ENCODE measurements at regions of chr9 and their contacts with region 1.

Region 1: GRCh38 chr9:6757456-6758247 is at the start of gene KDM4C:
- DNase-seq: peak; percentile 93
- H3K4me3 Mint-ChIP-seq: peak within 1 kb of the TSS; percentile 86
- H3K27ac Mint-ChIP-seq: peak within 1 kb of the TSS; percentile 99
- H3K4me1 Mint-ChIP-seq: peaks cover 25% of the 10 kb centered on the region
- H3K27me3 Mint-ChIP-seq: no peaks in the 10 kb centered on the region
- total RNA-seq, gene KDM4C: 27.4 to 28.9 TPM

Region 2: DNA sequence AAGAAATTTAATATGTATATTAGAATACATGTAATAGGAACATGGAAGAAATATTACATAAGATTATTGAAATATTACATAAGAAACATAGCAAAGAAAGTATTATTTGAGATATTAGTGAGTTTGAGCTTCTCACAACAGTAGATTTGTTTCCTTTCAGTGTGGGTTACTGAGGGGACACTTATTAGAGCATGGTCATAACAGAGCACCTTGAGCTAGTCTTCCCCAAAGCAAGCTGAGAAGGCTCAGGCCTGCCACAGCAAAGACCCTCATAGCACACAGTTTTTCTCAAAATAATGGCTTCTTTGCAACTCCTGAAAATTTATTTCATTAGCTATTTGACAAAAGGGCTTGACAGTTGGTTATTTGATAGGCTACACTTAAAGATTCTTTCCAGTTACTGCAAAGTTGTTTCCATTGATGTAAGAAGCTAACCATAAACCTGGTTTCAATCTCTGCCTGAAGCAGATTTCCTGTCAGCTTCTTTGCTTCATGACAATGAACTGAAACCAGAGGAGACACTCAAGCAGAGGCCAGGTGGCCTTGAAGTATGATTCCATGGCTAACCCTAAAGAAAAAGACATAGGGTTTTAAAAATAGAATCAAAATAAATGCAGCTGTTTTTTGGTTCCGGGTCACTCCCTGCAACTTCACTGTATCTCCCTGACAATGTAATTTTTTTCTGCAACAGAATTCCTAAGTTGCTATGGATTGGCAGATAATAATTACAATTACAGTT is 993.4 kb before region 1 on chr9:
- CTCF ChIA-PET with region 1: no interaction called
- intact Hi-C with region 1: loop called (anchors 10 kb)
- DNase-seq: peak; percentile 55
- H3K4me3 Mint-ChIP-seq: no peak overlapping the region
- H3K27ac Mint-ChIP-seq: peak overlapping the region; percentile 83
- H3K4me1 Mint-ChIP-seq: peaks cover 72% of the 10 kb centered on the region
- H3K27me3 Mint-ChIP-seq: no peaks in the 10 kb centered on the region

Region 3: GRCh38 chr9:5851445-5851844 is 906.2 kb before region 1 on chr9:
- CTCF ChIA-PET with region 1: no interaction called
- intact Hi-C with region 1: loop called (anchors 5 kb)
- DNase-seq: peak; percentile 73
- H3K4me3 Mint-ChIP-seq: no peak overlapping the region
- H3K27ac Mint-ChIP-seq: peak overlapping the region; percentile 26
- H3K4me1 Mint-ChIP-seq: peaks cover 41% of the 10 kb centered on the region
- H3K27me3 Mint-ChIP-seq: no peaks in the 10 kb centered on the region

Region 4: DNA sequence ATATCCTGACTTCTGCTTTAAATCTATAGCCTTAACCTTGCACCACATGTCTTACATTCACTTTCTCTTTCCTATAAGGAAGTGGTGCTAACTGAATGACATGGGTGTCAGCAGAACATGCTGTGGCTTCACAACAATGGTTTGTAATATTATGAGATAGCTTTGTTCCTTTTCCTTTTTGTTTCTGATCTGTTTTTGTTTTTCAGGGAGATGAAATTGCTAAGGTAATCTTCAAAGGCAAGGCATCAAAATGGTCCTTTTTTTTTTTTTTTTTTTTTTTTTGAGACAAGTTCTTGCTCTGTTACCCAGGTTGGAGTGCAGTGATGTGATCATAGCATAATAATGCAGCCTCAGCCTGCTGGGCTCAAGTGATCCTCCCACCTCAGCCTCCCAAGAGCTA is 688.7 kb before region 1 on chr9:
- CTCF ChIA-PET with region 1: no interaction called
- intact Hi-C with region 1: loop called (anchors 5 kb)
- DNase-seq: peak; percentile 38
- H3K4me3 Mint-ChIP-seq: peak overlapping the region; percentile 39
- H3K27ac Mint-ChIP-seq: peak overlapping the region; percentile 81
- H3K4me1 Mint-ChIP-seq: peaks cover 18% of the 10 kb centered on the region
- H3K27me3 Mint-ChIP-seq: no peaks in the 10 kb centered on the region

Region 5: GRCh38 chr9:6703898-6704639 is 53.6 kb before region 1 on chr9:
- CTCF ChIA-PET with region 1: no interaction called
- intact Hi-C with region 1: loop called (anchors 1 kb)
- DNase-seq: peak; percentile 75
- H3K4me3 Mint-ChIP-seq: peak overlapping the region; percentile 86
- H3K27ac Mint-ChIP-seq: peak overlapping the region; percentile 83
- H3K4me1 Mint-ChIP-seq: peaks cover 7% of the 10 kb centered on the region
- H3K27me3 Mint-ChIP-seq: no peaks in the 10 kb centered on the region

Region 6: DNA sequence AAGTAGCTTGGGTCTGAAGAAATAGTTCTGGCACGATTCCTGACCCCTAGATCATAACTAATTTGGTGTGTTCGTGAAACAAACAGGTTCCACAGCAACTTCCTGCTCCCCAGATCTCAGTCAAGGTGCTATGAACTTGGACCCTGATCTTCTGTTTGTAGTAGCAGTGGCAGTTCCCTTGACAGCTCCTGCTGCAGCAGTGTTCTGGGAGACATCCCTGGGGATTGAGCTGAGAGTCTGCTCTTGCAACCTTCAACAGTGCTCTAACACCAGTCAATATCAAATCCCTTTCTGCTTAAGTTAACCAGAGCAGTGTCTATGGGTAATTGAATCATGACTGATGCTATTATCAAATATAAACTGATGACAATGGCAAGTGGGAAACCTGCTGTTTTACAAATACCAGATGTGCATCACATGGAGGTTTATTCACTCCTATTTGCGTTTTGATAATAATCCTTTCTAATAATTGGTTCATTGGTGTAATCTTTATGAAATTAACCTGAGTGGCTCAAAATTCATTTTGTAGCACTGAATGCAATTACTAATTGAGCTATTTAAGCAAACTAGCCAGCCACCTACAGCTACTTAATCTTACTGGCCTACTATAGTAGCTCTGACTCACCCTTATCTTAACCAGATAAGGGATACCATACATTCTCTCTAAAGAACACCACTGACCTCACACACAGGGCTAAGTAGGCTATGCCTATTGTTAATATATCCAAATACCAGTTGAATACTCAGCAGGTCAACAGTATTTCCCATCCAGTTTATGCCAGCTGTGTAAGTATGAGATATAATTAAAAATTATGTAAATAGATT is 22.0 kb after region 1 on chr9:
- CTCF ChIA-PET with region 1: no interaction called
- intact Hi-C with region 1: loop called (anchors 1 kb)
- DNase-seq: no peak
- H3K4me3 Mint-ChIP-seq: no peak overlapping the region
- H3K27ac Mint-ChIP-seq: peak overlapping the region; percentile 19
- H3K4me1 Mint-ChIP-seq: peaks cover 70% of the 10 kb centered on the region
- H3K27me3 Mint-ChIP-seq: no peaks in the 10 kb centered on the region

Region 7: GRCh38 chr9:6931913-6932312 is 174.3 kb after region 1 on chr9:
- CTCF ChIA-PET with region 1: no interaction called
- intact Hi-C with region 1: no loop called
- DNase-seq: peak; percentile 70
- H3K4me3 Mint-ChIP-seq: no peak overlapping the region
- H3K27ac Mint-ChIP-seq: peak overlapping the region; percentile 41
- H3K4me1 Mint-ChIP-seq: peaks cover 23% of the 10 kb centered on the region
- H3K27me3 Mint-ChIP-seq: no peaks in the 10 kb centered on the region

Region 8: GRCh38 chr9:7799234-7799943 is 1041.7 kb after region 1 on chr9 and contains the start of gene DMAC1:
- CTCF ChIA-PET with region 1: no interaction called
- intact Hi-C with region 1: loop called (anchors 5 kb)
- DNase-seq: peak; percentile 82
- H3K4me3 Mint-ChIP-seq: peak within 1 kb of the TSS; percentile 91
- H3K27ac Mint-ChIP-seq: peak within 1 kb of the TSS; percentile 94
- H3K4me1 Mint-ChIP-seq: peaks cover 28% of the 10 kb centered on the region
- H3K27me3 Mint-ChIP-seq: no peaks in the 10 kb centered on the region
- total RNA-seq, gene DMAC1: 51.1 to 52.1 TPM

Measured in activated naive CD4-positive, alpha-beta T cell treated with anti-CD3 and anti-CD28 coated beads for 36 hours (primary cell).